Activated naive CD4-positive, alpha-beta T cell treated with anti-CD3 and anti-CD28 coated beads for 36 hours (primary cell): ENCODE measurements at regions of chr13 and their contacts with region 1.

Region 1: DNA sequence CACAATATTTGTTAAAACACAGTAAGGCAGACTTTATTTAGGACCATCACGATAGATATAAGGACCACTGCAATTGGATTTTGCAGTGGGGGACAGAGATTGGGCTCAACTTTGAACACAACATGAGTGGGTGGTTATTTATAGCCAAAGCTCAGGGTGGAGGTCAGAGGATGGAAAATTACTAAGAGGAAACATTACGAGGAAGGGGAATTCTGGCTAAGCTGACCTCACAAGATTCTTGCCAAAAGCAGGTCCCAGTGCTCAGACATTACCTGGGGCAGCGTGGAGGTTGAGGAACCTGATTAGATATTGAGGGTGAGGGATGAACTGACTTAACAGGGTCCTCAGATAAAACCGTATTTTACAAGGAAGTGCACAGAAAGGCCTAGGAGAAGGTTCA is 88.9 kb upstream of the NBEA start:
- DNase-seq: no peak
- H3K4me3 Mint-ChIP-seq: no peak overlapping the region
- H3K27ac Mint-ChIP-seq: no peak overlapping the region
- H3K4me1 Mint-ChIP-seq: no peaks in the 10 kb centered on the region
- H3K27me3 Mint-ChIP-seq: peaks cover 6% of the 10 kb centered on the region

Region 2: GRCh38 chr13:34156841-34157365 is 696.3 kb before region 1 on chr13:
- CTCF ChIA-PET with region 1: no interaction called
- intact Hi-C with region 1: loop called (anchors 5 kb)
- DNase-seq: peak; percentile 68
- H3K4me3 Mint-ChIP-seq: no peak overlapping the region
- H3K27ac Mint-ChIP-seq: no peak overlapping the region
- H3K4me1 Mint-ChIP-seq: peaks cover 8% of the 10 kb centered on the region
- H3K27me3 Mint-ChIP-seq: peaks cover 30% of the 10 kb centered on the region

Region 3: GRCh38 chr13:35107535-35107934 is 254.4 kb after region 1 on chr13:
- CTCF ChIA-PET with region 1: no interaction called
- intact Hi-C with region 1: no loop called
- DNase-seq: no peak
- H3K4me3 Mint-ChIP-seq: no peak overlapping the region
- H3K27ac Mint-ChIP-seq: no peak overlapping the region
- H3K4me1 Mint-ChIP-seq: no peaks in the 10 kb centered on the region
- H3K27me3 Mint-ChIP-seq: no peaks in the 10 kb centered on the region

Region 4: GRCh38 chr13:35646056-35646774 is 793.1 kb after region 1 on chr13:
- CTCF ChIA-PET with region 1: no interaction called
- intact Hi-C with region 1: no loop called
- DNase-seq: no peak
- H3K4me3 Mint-ChIP-seq: no peak overlapping the region
- H3K27ac Mint-ChIP-seq: no peak overlapping the region
- H3K4me1 Mint-ChIP-seq: no peaks in the 10 kb centered on the region
- H3K27me3 Mint-ChIP-seq: no peaks in the 10 kb centered on the region